ENCODE measurements at regions of chr3 and their contacts with region 1.

Region 1: DNA sequence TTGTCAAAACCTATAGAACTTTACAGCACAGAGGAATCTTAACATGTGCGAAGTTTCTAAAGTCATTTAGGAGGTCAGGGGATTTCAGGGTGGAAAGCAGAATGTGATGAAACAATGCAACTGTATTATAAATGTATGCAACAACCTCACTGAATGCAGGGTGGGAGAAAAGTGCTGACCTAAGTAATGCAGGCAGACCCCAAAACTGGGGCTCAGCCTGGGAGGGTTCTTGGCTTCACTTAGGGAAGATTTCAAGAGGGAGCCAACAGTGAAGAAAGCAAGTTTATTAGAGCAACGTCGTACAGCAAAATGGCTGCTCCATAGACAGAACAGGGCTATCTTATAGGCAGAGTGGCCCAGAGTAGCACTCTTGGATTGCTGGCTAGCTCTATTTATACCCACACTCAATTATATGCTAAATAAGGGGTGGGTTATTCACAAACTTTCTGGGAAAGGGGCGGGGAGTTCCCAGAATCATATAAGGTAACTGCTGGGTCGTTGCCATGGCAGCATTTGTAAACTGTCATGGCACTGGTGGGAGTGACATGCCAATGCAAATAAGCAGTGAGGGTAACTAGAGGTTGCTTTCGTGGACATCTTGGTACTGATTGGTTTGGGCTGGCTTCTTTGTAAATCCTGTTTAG is 14.2 kb upstream of the CAND2 start:
- DNase-seq: no peak
- ATAC-seq: no peak
- H3K4me3 Mint-ChIP-seq: no peak overlapping the region
- H3K27ac Mint-ChIP-seq: no peak overlapping the region
- H3K4me1 Mint-ChIP-seq: no peaks in the 10 kb centered on the region
- H3K27me3 Mint-ChIP-seq: peaks cover 51% of the 10 kb centered on the region

Region 2: DNA sequence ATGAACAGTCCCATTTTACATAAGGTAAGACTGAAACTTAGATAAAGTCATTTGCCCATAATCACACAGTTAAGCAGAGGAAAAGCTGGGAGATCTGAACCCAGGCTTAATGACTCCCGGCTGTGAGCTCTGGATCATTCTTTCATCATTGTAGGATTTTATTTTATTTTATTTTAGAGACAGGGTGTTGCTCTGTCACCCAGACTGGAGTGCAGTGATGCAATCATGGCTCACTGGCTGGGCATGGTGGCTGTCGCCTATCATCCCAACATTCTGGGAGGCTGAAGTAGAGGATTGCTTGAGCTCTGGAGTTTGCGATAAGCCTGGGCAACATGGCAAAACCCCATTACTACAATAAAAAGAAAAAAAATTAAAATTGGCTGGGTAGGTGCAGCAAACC is 87.2 kb before region 1 on chr3:
- CTCF ChIA-PET with region 1: no interaction called
- DNase-seq: no peak
- ATAC-seq: no peak
- H3K4me3 Mint-ChIP-seq: no peak overlapping the region
- H3K27ac Mint-ChIP-seq: no peak overlapping the region
- H3K4me1 Mint-ChIP-seq: no peaks in the 10 kb centered on the region
- H3K27me3 Mint-ChIP-seq: no peaks in the 10 kb centered on the region

Region 3: GRCh38 chr3:12719984-12720898 is 62.1 kb before region 1 on chr3:
- CTCF ChIA-PET with region 1: no interaction called
- DNase-seq: peak; percentile 84
- ATAC-seq: peak; percentile 91
- H3K4me3 Mint-ChIP-seq: peak overlapping the region; percentile 15
- H3K27ac Mint-ChIP-seq: no peak overlapping the region
- H3K4me1 Mint-ChIP-seq: peaks cover 15% of the 10 kb centered on the region
- H3K27me3 Mint-ChIP-seq: peaks cover 8% of the 10 kb centered on the region

Region 4: GRCh38 chr3:12796171-12797123 is 14.2 kb after region 1 on chr3 and contains the start of gene CAND2:
- CTCF ChIA-PET with region 1: interaction called, 15 read pairs
- DNase-seq: peak; percentile 38
- ATAC-seq: peak; percentile 73
- H3K4me3 Mint-ChIP-seq: peak within 1 kb of the TSS; percentile 26
- H3K27ac Mint-ChIP-seq: no peak within 1 kb of the TSS
- H3K4me1 Mint-ChIP-seq: peaks cover 3% of the 10 kb centered on the region
- H3K27me3 Mint-ChIP-seq: peaks cover 29% of the 10 kb centered on the region
- total RNA-seq, gene CAND2: 0.05 to 0.09 TPM

Region 5: GRCh38 chr3:12810013-12810780 is 27.9 kb after region 1 on chr3:
- CTCF ChIA-PET with region 1: interaction called, 31 read pairs
- DNase-seq: peak; percentile 96
- ATAC-seq: peak; percentile 99
- H3K4me3 Mint-ChIP-seq: peak overlapping the region; percentile 54
- H3K27ac Mint-ChIP-seq: peak overlapping the region; percentile 67
- H3K4me1 Mint-ChIP-seq: peaks cover 5% of the 10 kb centered on the region
- H3K27me3 Mint-ChIP-seq: peaks cover 11% of the 10 kb centered on the region

Region 6: DNA sequence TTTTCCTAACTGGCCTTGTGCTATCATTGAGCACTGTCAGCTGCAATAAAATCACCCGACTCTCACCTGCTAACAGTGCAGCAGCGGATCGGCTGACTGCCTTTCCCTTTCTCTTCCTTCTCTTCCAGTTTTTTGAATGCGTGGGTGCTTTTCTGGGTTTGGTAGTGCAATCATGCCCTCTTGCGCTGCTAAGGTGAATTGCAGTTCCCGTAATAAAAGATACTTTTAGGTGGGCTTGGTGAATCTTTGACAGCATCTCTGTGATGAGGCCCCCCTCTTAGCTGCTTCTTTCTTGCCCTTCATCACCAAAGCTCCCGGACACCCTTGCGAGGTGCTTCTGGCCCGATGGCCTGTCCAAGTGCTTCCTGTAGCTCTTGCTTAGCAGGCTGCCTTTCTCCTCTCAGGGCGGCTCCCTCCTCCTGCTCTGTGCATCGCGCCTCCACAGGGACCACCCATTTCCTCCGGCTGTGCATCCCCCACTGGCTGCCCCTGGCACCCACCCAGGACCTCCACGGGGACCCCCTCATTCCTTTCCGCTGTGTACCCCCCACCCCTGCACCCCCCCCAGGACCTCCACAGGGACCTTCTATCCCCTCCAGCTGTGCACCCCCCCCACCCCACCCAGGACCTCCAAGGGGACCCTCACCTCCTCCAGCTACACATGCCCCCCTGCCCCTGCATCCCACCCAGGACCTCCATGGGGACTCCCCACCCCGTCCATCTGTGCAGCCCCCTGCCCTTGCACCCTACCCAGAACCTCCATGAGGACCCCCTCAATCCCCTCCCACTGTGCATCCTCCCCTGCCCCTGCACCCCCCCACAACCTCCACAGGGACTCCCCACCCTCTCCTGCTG is 109.9 kb after region 1 on chr3:
- CTCF ChIA-PET with region 1: interaction called, 20 read pairs
- DNase-seq: peak; percentile 56
- ATAC-seq: peak; percentile 59
- H3K4me3 Mint-ChIP-seq: no peak overlapping the region
- H3K27ac Mint-ChIP-seq: no peak overlapping the region
- H3K4me1 Mint-ChIP-seq: peaks cover 14% of the 10 kb centered on the region
- H3K27me3 Mint-ChIP-seq: peaks cover 45% of the 10 kb centered on the region

Measured in activated CD8-positive, alpha-beta memory T cell treated with anti-CD3 and anti-CD28 coated beads, Interleukin-2, amount 10 ng/mL, durations not matched to agents 7 days and 5 days (primary cell).